Uterus (tissue), 4 donors: ENCODE measurements at regions of chr1 and their contacts with region 1.

Region 1: GRCh38 chr1:181166377-181167196 is 78.1 kb downstream of the IER5 start:
- DNase-seq: peak; percentile 66 to 83
- H3K4me3 ChIP-seq: no peak overlapping the region
- H3K27ac ChIP-seq: peak overlapping the region in 1 of 2 donors; percentile 24
- H3K4me1 ChIP-seq: no peaks in the 10 kb centered on the region
- H3K27me3 ChIP-seq: no peaks in the 10 kb centered on the region
- CTCF ChIP-seq: peak; percentile 87 to 94 (median 91)
- POLR2A ChIP-seq: no peak

Region 2: DNA sequence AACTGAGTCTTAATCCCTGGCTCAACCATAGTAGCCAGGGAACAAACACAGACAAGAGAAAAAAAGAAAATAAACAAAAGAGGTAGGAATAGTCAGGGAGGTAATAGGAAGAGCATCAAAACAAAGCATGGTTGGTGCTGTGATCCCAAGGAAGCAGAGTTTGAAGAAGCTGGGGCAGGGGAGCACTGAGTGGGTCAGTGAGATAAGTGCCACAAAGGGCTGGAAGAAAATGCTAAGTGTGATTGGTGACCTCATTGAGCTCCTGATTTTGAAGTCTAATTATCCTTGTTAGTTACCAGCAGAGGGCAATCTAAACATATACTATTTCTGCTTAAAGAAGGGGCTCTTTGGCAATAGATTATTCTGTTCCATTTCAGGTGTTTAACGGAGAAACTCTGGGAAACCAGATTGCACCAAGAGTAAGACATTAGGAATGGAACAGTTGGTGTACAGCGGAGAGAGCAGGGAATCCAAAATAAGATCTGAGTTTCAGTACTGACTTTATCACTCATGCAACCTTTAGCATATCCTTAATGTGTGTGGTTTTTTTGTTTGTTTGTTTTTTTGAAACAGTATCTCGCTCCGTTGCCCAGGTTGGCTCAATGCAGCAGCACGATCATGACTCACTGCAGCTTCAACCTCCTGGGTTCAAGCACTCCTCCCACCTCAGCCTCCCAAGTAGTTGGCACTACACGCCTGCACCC is 284.6 kb before region 1 on chr1:
- intact Hi-C with region 1: loop called (anchors 5 kb)
- DNase-seq: no peak
- H3K4me3 ChIP-seq: no peak overlapping the region
- H3K27ac ChIP-seq: no peak overlapping the region
- H3K4me1 ChIP-seq: no peaks in the 10 kb centered on the region
- H3K27me3 ChIP-seq: no peaks in the 10 kb centered on the region
- CTCF ChIP-seq: peak; percentile 39 to 61 (median 52)
- POLR2A ChIP-seq: no peak

Region 3: GRCh38 chr1:180981596-180982387 is 184.8 kb before region 1 on chr1:
- intact Hi-C with region 1: no loop called
- DNase-seq: no peak
- H3K4me3 ChIP-seq: no peak overlapping the region
- H3K27ac ChIP-seq: no peak overlapping the region
- H3K4me1 ChIP-seq: no peaks in the 10 kb centered on the region
- H3K27me3 ChIP-seq: no peaks in the 10 kb centered on the region
- CTCF ChIP-seq: no peak
- POLR2A ChIP-seq: no peak

Region 4: DNA sequence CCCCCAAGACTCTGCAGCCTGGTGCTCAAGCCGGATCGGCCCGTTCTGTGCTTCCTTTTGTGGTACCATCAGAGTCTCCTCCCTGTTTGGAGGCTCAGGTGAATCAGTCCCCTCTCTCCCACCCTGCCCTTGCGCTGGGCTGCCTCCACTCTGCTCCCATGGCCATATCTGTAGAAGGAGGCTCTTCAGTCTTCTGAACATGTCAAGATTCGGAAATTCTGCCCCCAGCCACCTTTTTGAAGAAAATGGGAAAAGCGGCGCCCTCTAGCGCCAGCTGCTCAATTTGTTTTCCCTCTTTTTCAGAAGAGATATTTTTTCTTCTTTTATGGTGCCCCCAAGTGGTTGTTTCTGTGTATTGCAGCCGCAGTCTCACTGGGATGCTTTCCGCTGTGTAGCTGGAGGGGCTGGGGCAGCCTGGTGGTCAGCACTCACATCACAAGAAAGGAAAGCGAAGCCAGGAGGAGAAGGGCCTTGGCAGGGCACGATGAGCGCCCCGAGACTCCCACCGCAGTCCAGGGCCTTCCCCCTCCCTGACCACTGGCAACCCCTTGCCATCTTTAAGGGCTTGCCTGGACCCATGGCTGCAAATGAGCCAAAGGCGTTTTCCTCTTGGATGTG is 258.3 kb after region 1 on chr1:
- intact Hi-C with region 1: no loop called
- DNase-seq: peak; percentile 50 to 55
- H3K4me3 ChIP-seq: no peak overlapping the region
- H3K27ac ChIP-seq: no peak overlapping the region
- H3K4me1 ChIP-seq: no peaks in the 10 kb centered on the region
- H3K27me3 ChIP-seq: no peaks in the 10 kb centered on the region
- CTCF ChIP-seq: peak; percentile 83 to 90 (median 85)
- POLR2A ChIP-seq: no peak